Transverse colon (tissue), 4 donors: ENCODE measurements at regions of chr19 and their contacts with region 1.

Region 1: GRCh38 chr19:5031231-5032100 is 62.6 kb downstream of the KDM4B start:
- DNase-seq: peak; percentile 86
- H3K4me3 ChIP-seq: no peak overlapping the region
- H3K27ac ChIP-seq: no peak overlapping the region
- H3K4me1 ChIP-seq: peaks cover 0 to 22% (median 9%) of the 10 kb centered on the region in 4 donors
- H3K27me3 ChIP-seq: no peaks in the 10 kb centered on the region
- CTCF ChIP-seq: peak; percentile 91 to 95 (median 92)
- EP300 ChIP-seq: no peak
- POLR2A ChIP-seq: no peak

Region 2: GRCh38 chr19:4815426-4816201 is 215.9 kb before region 1 on chr19:
- in situ Hi-C with region 1: no loop called
- intact Hi-C with region 1: loop called (anchors 5 kb)
- DNase-seq: peak; percentile 91
- H3K4me3 ChIP-seq: peak overlapping the region in 2 of 4 donors; percentile 13 to 33
- H3K27ac ChIP-seq: peak overlapping the region; percentile 7 to 47 (median 15)
- H3K4me1 ChIP-seq: peaks cover 0 to 22% (median 10%) of the 10 kb centered on the region in 4 donors
- H3K27me3 ChIP-seq: no peaks in the 10 kb centered on the region
- CTCF ChIP-seq: no peak
- EP300 ChIP-seq: no peak
- POLR2A ChIP-seq: peak; percentile 36

Region 3: GRCh38 chr19:4867534-4868285 is 163.8 kb before region 1 on chr19 and contains the start of gene PLIN3:
- in situ Hi-C with region 1: loop called in 3 of 4 experiments (anchors 5 to 25 kb)
- intact Hi-C with region 1: loop called (anchors 2 kb)
- DNase-seq: peak; percentile 98
- H3K4me3 ChIP-seq: peak within 1 kb of the TSS; percentile 75 to 92 (median 83)
- H3K27ac ChIP-seq: peak within 1 kb of the TSS; percentile 88 to 94 (median 90)
- H3K4me1 ChIP-seq: peaks cover 0 to 27% (median 13%) of the 10 kb centered on the region in 4 donors
- H3K27me3 ChIP-seq: no peaks in the 10 kb centered on the region
- CTCF ChIP-seq: no peak
- EP300 ChIP-seq: no peak
- POLR2A ChIP-seq: peak; percentile 67
- total RNA-seq, gene PLIN3: 27.5 to 85.5 (median 77.1) TPM

Region 4: GRCh38 chr19:4873930-4874329 is 157.5 kb before region 1 on chr19:
- in situ Hi-C with region 1: loop called in 3 of 4 experiments (anchors 5 to 25 kb)
- intact Hi-C with region 1: loop called (anchors 2 kb)
- DNase-seq: no peak
- H3K4me3 ChIP-seq: no peak overlapping the region
- H3K27ac ChIP-seq: no peak overlapping the region
- H3K4me1 ChIP-seq: peaks cover 0 to 11% (median 5%) of the 10 kb centered on the region in 4 donors
- H3K27me3 ChIP-seq: no peaks in the 10 kb centered on the region
- CTCF ChIP-seq: no peak
- EP300 ChIP-seq: no peak
- POLR2A ChIP-seq: no peak

Region 5: GRCh38 chr19:4988770-4989251 is 42.7 kb before region 1 on chr19:
- in situ Hi-C with region 1: no loop called
- intact Hi-C with region 1: loop called (anchors 10 kb)
- DNase-seq: peak; percentile 45
- H3K4me3 ChIP-seq: no peak overlapping the region
- H3K27ac ChIP-seq: peak overlapping the region; percentile 5 to 38 (median 29)
- H3K4me1 ChIP-seq: peaks cover 7 to 33% (median 18%) of the 10 kb centered on the region in 4 donors
- H3K27me3 ChIP-seq: no peaks in the 10 kb centered on the region
- CTCF ChIP-seq: no peak
- EP300 ChIP-seq: no peak
- POLR2A ChIP-seq: no peak